ENCODE measurements at regions of chr4 and their contacts with region 1.

Region 1: DNA sequence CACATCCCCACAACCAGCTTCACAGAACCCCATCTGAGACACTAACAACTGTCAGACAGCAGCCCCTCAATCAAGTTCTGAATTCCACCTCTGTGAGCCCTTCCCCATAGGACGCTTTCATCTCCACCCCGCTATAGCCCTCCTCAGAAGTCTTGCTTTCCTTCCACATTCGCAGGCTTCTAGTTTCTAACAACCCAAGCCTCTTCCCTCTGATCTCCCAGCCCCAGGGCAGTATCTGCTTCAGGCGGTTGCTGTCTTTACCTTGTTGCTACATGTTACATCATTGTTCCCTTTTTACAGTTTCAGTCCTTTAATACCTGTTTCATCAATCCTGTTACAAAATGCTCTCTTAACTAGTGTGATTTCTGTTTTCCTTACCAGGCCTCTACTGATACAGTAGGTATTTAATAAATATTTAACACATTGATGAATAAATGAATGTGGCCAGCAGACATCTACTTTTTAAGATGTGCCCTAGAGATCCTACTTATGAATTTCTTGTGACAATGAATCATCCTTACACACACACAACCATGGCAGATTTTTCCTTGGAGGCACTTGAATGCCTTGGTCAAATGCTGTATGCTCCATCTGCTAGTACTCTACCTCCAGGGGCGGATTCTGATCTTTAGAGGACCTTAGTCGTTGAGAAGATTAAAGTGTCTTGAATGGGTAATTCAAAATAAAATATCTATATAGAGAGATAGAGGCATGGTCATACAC is 164.7 kb upstream of the SLIT2 start:
- DNase-seq: no peak
- H3K4me3 ChIP-seq: no peak overlapping the region
- H3K27ac ChIP-seq: no peak overlapping the region
- H3K4me1 ChIP-seq: no peaks in the 10 kb centered on the region
- H3K27me3 ChIP-seq: no peaks in the 10 kb centered on the region
- CTCF ChIP-seq: no peak
- EP300 ChIP-seq: no peak
- POLR2A ChIP-seq: no peak

Region 2: GRCh38 chr4:19429684-19430083 is 657.3 kb before region 1 on chr4:
- in situ Hi-C with region 1: no loop called
- intact Hi-C with region 1: no loop called
- DNase-seq: no peak
- H3K4me3 ChIP-seq: no peak overlapping the region
- H3K27ac ChIP-seq: no peak overlapping the region
- H3K4me1 ChIP-seq: no peaks in the 10 kb centered on the region
- H3K27me3 ChIP-seq: no peaks in the 10 kb centered on the region
- CTCF ChIP-seq: no peak
- EP300 ChIP-seq: no peak
- POLR2A ChIP-seq: no peak

Region 3: DNA sequence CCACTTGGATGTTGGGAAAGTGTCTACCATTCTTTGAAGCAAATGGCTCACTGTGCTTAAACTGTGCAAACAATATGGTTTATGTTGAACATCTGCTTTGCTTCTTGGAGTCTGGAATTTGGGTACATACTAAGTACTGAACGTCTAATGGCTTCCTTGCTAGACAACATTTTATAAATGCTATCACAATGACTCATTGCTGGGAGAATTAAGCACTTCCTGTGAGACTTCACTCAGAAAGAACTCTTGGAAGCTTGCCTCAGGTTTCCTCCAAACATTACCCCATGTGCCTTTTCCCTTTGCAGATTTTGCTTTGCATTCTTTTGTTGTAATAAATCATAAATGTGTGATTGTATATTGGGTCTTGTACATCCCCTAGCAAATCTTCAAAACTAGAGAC is 753.0 kb after region 1 on chr4:
- in situ Hi-C with region 1: no loop called
- intact Hi-C with region 1: loop called (anchors 5 kb)
- DNase-seq: no peak
- H3K4me3 ChIP-seq: no peak overlapping the region
- H3K27ac ChIP-seq: no peak overlapping the region
- H3K4me1 ChIP-seq: no peaks in the 10 kb centered on the region
- H3K27me3 ChIP-seq: no peaks in the 10 kb centered on the region
- CTCF ChIP-seq: no peak
- EP300 ChIP-seq: no peak
- POLR2A ChIP-seq: no peak